Panc1 (cell line): ENCODE measurements at regions of chr3 and their contacts with region 1.

Region 1: GRCh38 chr3:14921078-14921616 is 26.2 kb upstream of the NR2C2 start:
- DNase-seq: peak; percentile 51
- ATAC-seq: peak; percentile 87
- H3K4me3 ChIP-seq: no peak overlapping the region
- H3K27ac ChIP-seq: no peak overlapping the region
- H3K4me1 ChIP-seq: no peaks in the 10 kb centered on the region
- H3K27me3 ChIP-seq: no peaks in the 10 kb centered on the region
- CTCF ChIP-seq: peak; percentile 91

Region 2: DNA sequence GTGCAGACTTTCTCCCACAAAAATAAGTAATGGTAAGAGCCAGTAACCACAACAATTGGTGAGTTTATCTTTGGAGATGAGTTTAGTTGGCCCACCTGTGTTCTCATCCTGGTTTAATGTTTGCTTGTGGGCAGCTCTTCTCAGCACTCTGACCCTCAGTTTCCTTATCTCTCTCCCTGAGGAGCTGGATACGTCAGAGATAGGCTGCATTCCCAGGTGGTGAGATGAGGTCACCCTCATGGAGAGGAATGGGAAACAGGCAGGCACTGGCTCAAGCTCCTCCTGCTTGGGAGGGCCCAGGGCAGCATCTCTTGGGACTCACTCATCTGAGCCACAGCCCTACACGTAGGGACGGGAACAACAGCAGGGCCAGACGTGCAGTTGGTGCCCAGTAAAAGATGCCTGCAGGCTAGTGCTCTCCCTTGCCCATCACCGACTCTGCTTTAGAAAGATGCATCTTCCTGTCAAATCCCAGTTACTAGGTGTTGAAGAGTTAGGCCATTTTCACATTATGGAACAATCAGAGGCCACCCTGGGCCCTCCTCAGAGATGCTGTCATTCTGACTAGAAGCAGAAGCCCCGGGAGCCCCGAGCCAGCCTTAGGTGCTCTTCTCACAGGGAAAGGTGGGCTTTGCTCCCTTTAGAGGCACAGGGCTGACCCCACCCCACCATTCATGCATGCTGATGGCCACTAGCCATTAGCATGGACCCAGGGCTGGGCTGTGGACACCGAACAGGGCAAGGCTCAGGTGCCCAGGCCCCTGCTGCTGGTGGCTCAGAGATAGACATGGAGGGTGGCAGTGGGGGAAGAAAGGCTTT is 440.7 kb before region 1 on chr3:
- CTCF ChIA-PET with region 1: no interaction called
- POLR2A ChIA-PET with region 1: interaction called, 17 read pairs
- in situ Hi-C with region 1: no loop called
- intact Hi-C with region 1: no loop called
- DNase-seq: no peak
- ATAC-seq: no peak
- H3K4me3 ChIP-seq: no peak overlapping the region
- H3K27ac ChIP-seq: no peak overlapping the region
- H3K4me1 ChIP-seq: no peaks in the 10 kb centered on the region
- H3K27me3 ChIP-seq: no peaks in the 10 kb centered on the region
- CTCF ChIP-seq: no peak

Region 3: GRCh38 chr3:14508961-14509795 is 412.0 kb before region 1 on chr3:
- CTCF ChIA-PET with region 1: no interaction called
- POLR2A ChIA-PET with region 1: no interaction called
- in situ Hi-C with region 1: no loop called
- intact Hi-C with region 1: loop called (anchors 5 kb)
- DNase-seq: no peak
- ATAC-seq: peak; percentile 87
- H3K4me3 ChIP-seq: 0 out of 4 replicates have a peak overlapping the region, but pooled peaks of 1 of the 2 experiments have one; percentile 6
- H3K27ac ChIP-seq: no peak overlapping the region
- H3K4me1 ChIP-seq: no peaks in the 10 kb centered on the region
- H3K27me3 ChIP-seq: no peaks in the 10 kb centered on the region
- CTCF ChIP-seq: peak; percentile 90

Region 4: DNA sequence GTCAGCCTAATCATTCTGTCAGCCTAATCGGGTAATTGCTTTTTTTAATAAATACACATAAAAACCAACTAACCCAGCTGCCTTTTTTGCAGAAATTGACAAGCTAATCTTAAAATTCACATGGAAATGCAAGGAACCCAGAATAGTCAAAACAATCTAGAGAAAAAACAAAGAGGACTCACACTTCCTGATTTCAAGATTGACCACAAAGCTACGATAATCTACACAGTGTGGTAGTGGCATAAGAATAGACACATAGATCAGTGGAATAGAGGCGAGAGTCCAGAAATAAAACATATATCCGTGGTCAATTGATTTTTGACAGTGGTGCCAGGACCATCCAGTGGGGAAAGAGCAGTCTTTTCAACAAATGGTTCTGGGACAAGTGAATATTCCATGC is 248.6 kb before region 1 on chr3:
- CTCF ChIA-PET with region 1: interaction called, 5 read pairs
- POLR2A ChIA-PET with region 1: no interaction called
- in situ Hi-C with region 1: no loop called
- intact Hi-C with region 1: loop called (anchors 2 kb)
- DNase-seq: no peak
- ATAC-seq: no peak
- H3K4me3 ChIP-seq: no peak overlapping the region
- H3K27ac ChIP-seq: no peak overlapping the region
- H3K4me1 ChIP-seq: no peaks in the 10 kb centered on the region
- H3K27me3 ChIP-seq: no peaks in the 10 kb centered on the region
- CTCF ChIP-seq: no peak

Region 5: GRCh38 chr3:14791343-14791945 is 129.7 kb before region 1 on chr3:
- CTCF ChIA-PET with region 1: interaction called, 4 read pairs
- POLR2A ChIA-PET with region 1: no interaction called
- in situ Hi-C with region 1: no loop called
- intact Hi-C with region 1: loop called (anchors 1 kb)
- DNase-seq: peak; percentile 12
- ATAC-seq: peak; percentile 91
- H3K4me3 ChIP-seq: no peak overlapping the region
- H3K27ac ChIP-seq: no peak overlapping the region
- H3K4me1 ChIP-seq: no peaks in the 10 kb centered on the region
- H3K27me3 ChIP-seq: no peaks in the 10 kb centered on the region
- CTCF ChIP-seq: peak; percentile 89

Region 6: GRCh38 chr3:14946739-14947099 is 25.6 kb after region 1 on chr3:
- CTCF ChIA-PET with region 1: no interaction called
- POLR2A ChIA-PET with region 1: no interaction called
- in situ Hi-C with region 1: no loop called
- intact Hi-C with region 1: no loop called
- DNase-seq: no peak
- ATAC-seq: no peak
- H3K4me3 ChIP-seq: peak overlapping the region; percentile 80 to 89
- H3K27ac ChIP-seq: peak overlapping the region; percentile 88
- H3K4me1 ChIP-seq: peaks cover 16% of the 10 kb centered on the region
- H3K27me3 ChIP-seq: no peaks in the 10 kb centered on the region
- CTCF ChIP-seq: no peak

Region 7: GRCh38 chr3:15032650-15033049 is 111.5 kb after region 1 on chr3:
- CTCF ChIA-PET with region 1: interaction called, 3 read pairs
- POLR2A ChIA-PET with region 1: no interaction called
- in situ Hi-C with region 1: no loop called
- intact Hi-C with region 1: loop called (anchors 10 kb)
- DNase-seq: no peak
- ATAC-seq: no peak
- H3K4me3 ChIP-seq: no peak overlapping the region
- H3K27ac ChIP-seq: no peak overlapping the region
- H3K4me1 ChIP-seq: no peaks in the 10 kb centered on the region
- H3K27me3 ChIP-seq: no peaks in the 10 kb centered on the region
- CTCF ChIP-seq: no peak